Naive thymus-derived CD4-positive, alpha-beta T cell (primary cell): ENCODE measurements at regions of chr19 and their contacts with region 1.

Region 1: DNA sequence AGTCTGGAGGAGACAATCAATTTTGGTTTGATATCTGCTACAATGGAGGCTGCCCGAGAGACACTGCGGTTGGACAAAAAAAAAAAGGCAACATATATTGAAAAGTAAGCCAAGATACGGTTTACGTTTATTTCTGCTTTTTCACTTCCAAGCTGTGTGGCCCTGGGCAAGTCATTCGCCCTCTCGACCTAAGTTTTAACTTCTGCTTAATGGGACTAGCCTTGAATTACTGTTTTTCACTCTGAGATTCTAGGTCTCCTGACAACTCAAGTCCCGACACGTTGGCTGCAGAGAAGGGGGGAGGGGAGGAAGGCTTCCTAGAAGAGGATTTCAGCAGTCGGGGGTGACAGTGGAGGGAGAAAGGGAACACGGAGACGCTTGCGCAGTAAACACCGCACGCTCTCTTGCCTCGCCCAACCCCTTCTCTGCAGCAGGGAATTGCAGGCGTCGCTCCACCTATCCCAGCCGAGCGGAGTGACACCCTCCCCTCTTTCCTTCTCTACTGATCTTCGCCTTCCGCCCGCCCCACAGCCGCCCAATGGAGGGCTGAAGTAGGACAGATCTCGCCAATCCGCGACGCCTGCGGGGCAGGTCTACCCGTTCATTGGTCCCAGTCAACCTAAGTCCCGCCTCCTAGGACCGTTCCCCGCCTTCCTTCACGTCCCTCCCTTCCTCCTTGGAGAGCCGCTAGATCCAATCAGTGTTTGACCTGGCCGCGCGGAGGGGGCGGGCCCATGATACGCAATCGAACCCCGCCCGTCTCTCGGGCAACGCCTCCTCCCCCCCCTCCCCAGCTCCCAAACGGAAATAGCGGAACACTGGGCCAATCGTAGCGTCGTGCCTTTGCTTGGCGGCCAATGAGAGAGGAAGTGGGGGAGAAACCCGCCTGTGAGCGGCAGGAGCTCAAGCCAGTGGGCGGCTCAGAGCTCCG is 529 bp upstream of the AP2A1 start:
- DNase-seq: peak; percentile 86 to 100 (median 99)
- ATAC-seq: peak; percentile 92
- H3K4me3 ChIP-seq: peak overlapping the region; percentile 79
- H3K4me3 Mint-ChIP-seq: peak overlapping the region; percentile 89 to 98 (median 96)
- H3K27ac ChIP-seq: peak overlapping the region; percentile 80
- H3K27ac Mint-ChIP-seq: peak overlapping the region; percentile 84 to 98 (median 96)
- H3K4me1 ChIP-seq: peaks cover 11 to 16% of the 10 kb centered on the region in 2 donors
- H3K4me1 Mint-ChIP-seq: peaks cover 15 to 43% (median 36%) of the 10 kb centered on the region in 7 donors
- H3K27me3 ChIP-seq: no peaks in the 10 kb centered on the region
- H3K27me3 Mint-ChIP-seq: no peaks in the 10 kb centered on the region

Region 2: DNA sequence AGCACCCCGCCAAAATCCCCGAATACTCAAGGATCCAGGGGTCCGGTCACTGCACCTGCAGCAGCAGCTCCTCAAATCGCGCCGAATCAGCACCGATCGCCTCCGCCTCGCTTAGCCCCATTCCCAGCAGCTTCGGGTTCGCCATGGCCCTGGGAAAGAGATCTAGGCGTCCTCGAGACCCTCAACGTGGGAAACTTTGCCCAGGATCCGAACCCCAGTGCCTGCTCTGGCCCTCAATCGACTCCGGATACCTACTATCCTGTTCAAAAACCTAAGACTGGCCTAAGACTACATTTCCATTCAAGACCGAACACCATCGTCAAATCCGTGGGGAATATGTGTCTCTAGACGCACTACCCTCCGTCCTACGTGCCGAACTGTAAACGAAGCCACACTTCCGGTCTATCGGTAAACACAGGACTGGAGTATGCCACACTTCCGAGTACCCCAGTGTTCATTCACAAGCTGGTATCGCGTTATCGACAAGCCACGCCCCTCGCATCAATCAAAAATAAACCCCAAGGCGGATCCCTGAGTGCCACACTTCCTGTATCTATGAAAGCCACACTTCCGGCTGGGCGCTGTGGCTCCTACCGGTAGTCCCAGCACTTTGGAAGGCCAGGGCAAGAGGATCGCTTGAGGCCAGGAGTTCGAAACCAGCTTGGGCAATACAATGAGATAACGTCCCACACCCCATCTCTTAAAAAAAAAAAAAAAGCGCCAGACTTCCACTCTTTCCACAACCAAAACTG is 314.7 kb before region 1 on chr19 and contains the start of gene PIH1D1:
- CTCF ChIA-PET with region 1: no interaction called
- POLR2A ChIA-PET with region 1: no interaction called
- intact Hi-C with region 1: loop called in 1 of 2 experiments (anchors 1 kb)
- DNase-seq: peak; percentile 69 to 97 (median 94)
- ATAC-seq: peak; percentile 71
- H3K4me3 ChIP-seq: peak within 1 kb of the TSS; percentile 85
- H3K4me3 Mint-ChIP-seq: peak within 1 kb of the TSS; percentile 95 to 100 (median 99)
- H3K27ac ChIP-seq: peak within 1 kb of the TSS; percentile 95
- H3K27ac Mint-ChIP-seq: peak within 1 kb of the TSS; percentile 92 to 100 (median 99)
- H3K4me1 ChIP-seq: peaks cover 15 to 26% of the 10 kb centered on the region in 2 donors
- H3K4me1 Mint-ChIP-seq: peaks cover 31 to 68% (median 55%) of the 10 kb centered on the region in 7 donors
- H3K27me3 ChIP-seq: no peaks in the 10 kb centered on the region
- H3K27me3 Mint-ChIP-seq: no peaks in the 10 kb centered on the region
- total RNA-seq, gene PIH1D1: 136 to 183 (median 159) TPM

Region 3: DNA sequence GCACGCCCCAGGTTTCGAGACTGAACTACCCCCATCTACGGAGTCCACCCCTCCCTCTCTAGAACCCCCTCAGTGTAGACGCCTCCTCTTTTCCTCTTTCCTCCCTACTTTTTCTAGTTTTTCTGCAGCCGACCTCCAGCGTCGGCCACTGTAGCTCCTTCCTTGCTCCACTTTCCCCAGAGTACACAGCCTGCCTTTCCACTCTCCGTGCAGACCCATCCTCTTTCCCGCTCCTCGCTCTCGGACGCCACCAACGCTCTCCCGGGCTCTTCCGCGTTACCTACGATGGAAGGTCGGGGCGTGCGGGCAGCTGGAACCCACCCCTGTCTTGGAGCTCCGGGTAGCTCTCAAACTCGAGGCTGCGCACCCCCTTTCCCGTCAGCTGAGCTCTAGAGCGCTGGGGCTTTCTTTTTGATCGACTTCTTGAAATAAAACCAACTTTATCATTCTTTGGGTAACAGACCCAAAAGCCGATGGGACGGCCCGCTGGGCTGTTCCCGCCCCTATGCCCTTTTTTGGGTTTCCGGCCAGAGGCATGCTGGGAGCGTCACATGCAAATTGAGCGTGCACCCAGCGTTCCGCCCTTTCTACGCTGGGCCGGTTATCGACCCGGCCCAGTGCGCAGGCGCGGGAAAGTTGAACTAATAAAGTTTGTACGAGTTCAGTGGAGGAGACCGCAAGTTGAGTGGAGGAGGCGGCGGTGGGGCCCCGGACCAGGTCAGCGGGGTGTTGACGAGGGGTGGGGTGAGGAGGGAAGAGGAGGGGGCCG is 100.7 kb before region 1 on chr19 and contains the starts of genes BCL2L12 and IRF3:
- CTCF ChIA-PET with region 1: no interaction called
- POLR2A ChIA-PET with region 1: no interaction called
- intact Hi-C with region 1: loop called in 1 of 2 experiments (anchors 1 kb)
- DNase-seq: peak; percentile 99
- ATAC-seq: peak; percentile 90
- H3K4me3 ChIP-seq: peak within 1 kb of the TSS; percentile 95
- H3K4me3 Mint-ChIP-seq: peak within 1 kb of the TSS; percentile 97 to 100 (median 99)
- H3K27ac ChIP-seq: peak within 1 kb of the TSS; percentile 80
- H3K27ac Mint-ChIP-seq: peak within 1 kb of the TSS; percentile 96 to 99 (median 97)
- H3K4me1 ChIP-seq: peaks cover 23% of the 10 kb centered on the region in 2 donors
- H3K4me1 Mint-ChIP-seq: peaks cover 24 to 47% (median 39%) of the 10 kb centered on the region in 7 donors
- H3K27me3 ChIP-seq: no peaks in the 10 kb centered on the region
- H3K27me3 Mint-ChIP-seq: peaks cover 0 to 2% (median 0%) of the 10 kb centered on the region in 5 donors
- total RNA-seq, gene BCL2L12: 11.3 to 57.2 (median 22.6) TPM
- total RNA-seq, gene IRF3: 176 to 346 (median 212) TPM

Region 4: DNA sequence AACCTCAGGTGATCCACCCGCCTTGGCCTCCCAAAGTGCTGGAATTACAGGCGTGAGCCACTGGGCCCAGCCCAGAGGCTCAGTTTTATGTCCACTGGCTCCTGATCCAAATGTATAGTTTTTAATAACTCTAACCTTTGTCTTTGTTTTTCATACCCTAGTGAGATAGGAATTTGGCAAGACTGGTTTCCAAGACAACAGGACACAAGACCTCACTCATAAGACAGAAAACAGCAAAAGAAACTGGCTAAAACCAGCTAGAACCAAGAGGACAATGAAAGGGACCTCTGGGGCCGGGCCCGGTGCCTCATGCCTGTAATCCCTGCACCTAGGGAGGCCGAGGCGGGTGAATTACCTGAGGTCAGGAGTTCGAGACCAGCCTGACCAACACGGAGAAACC is 47.8 kb before region 1 on chr19:
- CTCF ChIA-PET with region 1: no interaction called
- POLR2A ChIA-PET with region 1: interaction called, 23 read pairs
- intact Hi-C with region 1: loop called in 1 of 2 experiments (anchors 1 kb)
- DNase-seq: no peak
- ATAC-seq: no peak
- H3K4me3 ChIP-seq: no peak overlapping the region
- H3K4me3 Mint-ChIP-seq: peak overlapping the region; percentile 23 to 96 (median 77)
- H3K27ac ChIP-seq: no peak overlapping the region
- H3K27ac Mint-ChIP-seq: peak overlapping the region; percentile 8 to 97 (median 81)
- H3K4me1 ChIP-seq: peaks cover 6 to 9% of the 10 kb centered on the region in 2 donors
- H3K4me1 Mint-ChIP-seq: peaks cover 7 to 15% (median 11%) of the 10 kb centered on the region in 7 donors
- H3K27me3 ChIP-seq: no peaks in the 10 kb centered on the region
- H3K27me3 Mint-ChIP-seq: no peaks in the 10 kb centered on the region

Region 5: DNA sequence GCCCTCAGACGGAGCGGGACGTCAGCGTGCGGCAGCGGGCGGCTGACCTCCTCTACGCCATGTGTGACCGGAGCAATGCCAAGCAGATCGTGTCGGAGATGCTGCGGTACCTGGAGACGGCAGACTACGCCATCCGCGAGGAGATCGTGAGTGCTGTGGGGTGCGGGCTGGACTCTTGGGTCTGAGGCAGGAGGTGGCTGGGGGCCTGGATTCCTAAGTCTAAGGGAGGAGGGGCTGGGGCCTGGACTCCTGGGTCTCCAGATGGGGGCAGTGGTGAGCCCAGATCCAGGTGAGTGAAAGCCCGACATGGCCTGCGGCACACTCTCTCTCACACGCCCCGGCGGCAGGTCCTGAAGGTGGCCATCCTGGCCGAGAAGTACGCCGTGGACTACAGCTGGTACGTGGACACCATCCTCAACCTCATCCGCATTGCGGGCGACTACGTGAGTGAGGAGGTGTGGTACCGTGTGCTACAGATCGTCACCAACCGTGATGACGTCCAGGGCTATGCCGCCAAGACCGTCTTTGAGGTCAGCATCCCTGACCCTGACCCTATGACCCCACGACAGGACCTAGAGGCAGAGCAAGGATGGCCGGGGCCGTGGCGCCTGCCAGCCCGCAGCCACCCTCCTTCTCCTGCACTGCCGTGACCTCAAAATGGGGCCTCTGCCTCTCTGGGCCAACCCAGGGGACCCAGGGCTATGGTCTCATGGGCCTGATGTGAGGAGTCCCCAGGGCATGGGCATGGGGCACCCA is 33.5 kb after region 1 on chr19:
- CTCF ChIA-PET with region 1: no interaction called
- POLR2A ChIA-PET with region 1: no interaction called
- intact Hi-C with region 1: no loop called
- DNase-seq: no peak
- ATAC-seq: peak; percentile 51
- H3K4me3 ChIP-seq: no peak overlapping the region
- H3K4me3 Mint-ChIP-seq: no peak overlapping the region
- H3K27ac ChIP-seq: no peak overlapping the region
- H3K27ac Mint-ChIP-seq: no peak overlapping the region
- H3K4me1 ChIP-seq: no peaks in the 10 kb centered on the region
- H3K4me1 Mint-ChIP-seq: peaks cover 0 to 5% (median 0%) of the 10 kb centered on the region in 7 donors
- H3K27me3 ChIP-seq: no peaks in the 10 kb centered on the region
- H3K27me3 Mint-ChIP-seq: no peaks in the 10 kb centered on the region

Region 6: DNA sequence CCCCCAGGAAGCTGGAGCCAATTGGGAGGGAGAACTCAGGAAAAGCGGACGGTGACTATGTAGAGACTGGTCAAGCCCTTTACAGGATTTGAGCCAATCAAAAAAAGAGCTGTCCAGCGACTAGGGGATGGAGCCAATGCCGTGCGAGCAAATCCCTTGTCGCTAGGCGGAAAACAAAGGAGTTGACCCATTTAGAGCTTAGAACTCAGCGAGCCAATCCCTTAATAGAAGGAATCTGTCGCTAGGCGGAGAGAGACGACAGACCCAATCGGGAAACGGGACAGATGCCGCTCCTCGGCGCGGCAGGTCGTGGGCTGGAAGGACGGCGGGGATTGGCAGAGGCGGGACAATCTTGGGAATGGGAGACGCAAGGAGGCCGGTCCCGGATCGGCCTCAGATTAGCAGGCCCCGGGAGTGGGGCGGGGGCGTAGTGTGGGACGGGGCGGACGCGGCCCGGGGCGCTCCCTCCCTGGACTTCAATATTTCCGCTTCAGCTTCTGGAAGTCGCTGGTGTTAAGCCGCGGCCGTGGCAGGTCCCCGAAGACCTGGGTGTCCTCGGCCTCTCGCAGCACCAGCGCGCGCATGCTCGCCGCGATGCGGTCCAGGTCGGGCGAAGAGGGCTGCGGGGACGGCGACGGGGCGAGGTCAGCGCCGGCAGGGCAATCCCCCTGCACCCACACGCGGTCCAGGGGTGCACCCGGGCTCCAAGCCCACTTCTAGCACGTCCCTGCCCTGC is 103.3 kb after region 1 on chr19:
- CTCF ChIA-PET with region 1: no interaction called
- POLR2A ChIA-PET with region 1: interaction called, 5 read pairs
- intact Hi-C with region 1: loop called (anchors 1 kb)
- DNase-seq: peak; percentile 83 to 94 (median 87)
- ATAC-seq: peak; percentile 87
- H3K4me3 ChIP-seq: peak overlapping the region; percentile 58
- H3K4me3 Mint-ChIP-seq: peak overlapping the region in 2 of 10 donors; percentile 87
- H3K27ac ChIP-seq: peak overlapping the region; percentile 72
- H3K27ac Mint-ChIP-seq: peak overlapping the region in 5 of 9 donors; percentile 59 to 87 (median 74)
- H3K4me1 ChIP-seq: peaks cover 31 to 38% of the 10 kb centered on the region in 2 donors
- H3K4me1 Mint-ChIP-seq: peaks cover 25 to 51% (median 45%) of the 10 kb centered on the region in 7 donors
- H3K27me3 ChIP-seq: no peaks in the 10 kb centered on the region
- H3K27me3 Mint-ChIP-seq: no peaks in the 10 kb centered on the region

Region 7: DNA sequence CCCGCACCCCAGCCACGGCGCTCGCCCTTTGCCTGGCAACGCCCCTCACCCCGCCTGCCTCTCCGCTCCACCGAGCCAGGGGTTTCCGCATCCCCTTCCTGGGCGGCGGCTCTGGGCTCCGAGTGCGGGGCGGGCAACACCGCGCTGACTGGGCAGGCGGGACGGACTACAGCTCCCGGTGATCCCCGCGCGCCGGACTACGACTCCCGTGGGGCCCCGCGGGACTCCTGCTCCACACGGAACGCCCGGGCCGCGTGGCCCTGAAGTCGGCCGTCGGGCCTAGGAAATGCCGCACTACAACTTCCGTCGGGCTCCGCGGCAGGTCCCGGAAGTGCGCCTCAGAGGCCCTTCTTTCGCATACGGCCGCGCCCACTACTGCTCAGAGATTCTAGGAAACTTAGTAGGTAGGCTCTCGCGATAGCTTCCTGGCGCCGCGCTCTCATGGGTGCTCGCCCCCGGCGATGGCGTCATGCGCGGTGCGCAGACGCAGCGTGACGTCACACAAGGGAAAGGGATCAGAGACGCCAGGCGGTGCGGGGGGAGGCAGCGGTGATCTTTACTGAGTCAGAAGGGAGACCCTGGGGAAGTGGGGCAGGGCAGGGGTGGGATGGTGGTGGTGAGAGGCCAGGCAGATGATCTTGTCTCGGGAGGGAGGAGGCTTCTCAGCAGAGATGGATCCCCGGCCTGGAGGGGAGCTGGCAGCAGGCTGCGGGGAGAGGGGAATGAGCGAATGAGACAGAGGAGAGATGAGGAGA is 745.0 kb after region 1 on chr19 and contains the start of gene JOSD2:
- CTCF ChIA-PET with region 1: no interaction called
- POLR2A ChIA-PET with region 1: no interaction called
- intact Hi-C with region 1: loop called in 1 of 2 experiments (anchors 2 kb)
- DNase-seq: peak; percentile 89 to 99 (median 96)
- ATAC-seq: peak; percentile 94
- H3K4me3 ChIP-seq: peak within 1 kb of the TSS; percentile 75
- H3K4me3 Mint-ChIP-seq: peak within 1 kb of the TSS; percentile 75 to 97 (median 88)
- H3K27ac ChIP-seq: peak within 1 kb of the TSS; percentile 86
- H3K27ac Mint-ChIP-seq: peak within 1 kb of the TSS; percentile 87 to 99 (median 97)
- H3K4me1 ChIP-seq: peaks cover 7 to 16% of the 10 kb centered on the region in 2 donors
- H3K4me1 Mint-ChIP-seq: peaks cover 0 to 27% (median 19%) of the 10 kb centered on the region in 7 donors
- H3K27me3 ChIP-seq: no peaks in the 10 kb centered on the region
- H3K27me3 Mint-ChIP-seq: peaks cover 0 to 16% (median 6%) of the 10 kb centered on the region in 5 donors
- total RNA-seq, gene JOSD2: 13.0 to 45.9 (median 22.7) TPM